ENCODE measurements at regions of chr7 and their contacts with region 1.

Region 1: GRCh38 chr7:92833024-92833765 is 3.2 kb downstream of the CDK6 start:
- DNase-seq: peak; percentile 94
- ATAC-seq: peak; percentile 92
- H3K4me3 ChIP-seq: peak overlapping the region; percentile 77
- H3K27ac ChIP-seq: peak overlapping the region; percentile 85
- H3K4me1 ChIP-seq: peaks cover 25% of the 10 kb centered on the region
- H3K27me3 ChIP-seq: no peaks in the 10 kb centered on the region
- CTCF ChIP-seq: peak; percentile 85

Region 2: DNA sequence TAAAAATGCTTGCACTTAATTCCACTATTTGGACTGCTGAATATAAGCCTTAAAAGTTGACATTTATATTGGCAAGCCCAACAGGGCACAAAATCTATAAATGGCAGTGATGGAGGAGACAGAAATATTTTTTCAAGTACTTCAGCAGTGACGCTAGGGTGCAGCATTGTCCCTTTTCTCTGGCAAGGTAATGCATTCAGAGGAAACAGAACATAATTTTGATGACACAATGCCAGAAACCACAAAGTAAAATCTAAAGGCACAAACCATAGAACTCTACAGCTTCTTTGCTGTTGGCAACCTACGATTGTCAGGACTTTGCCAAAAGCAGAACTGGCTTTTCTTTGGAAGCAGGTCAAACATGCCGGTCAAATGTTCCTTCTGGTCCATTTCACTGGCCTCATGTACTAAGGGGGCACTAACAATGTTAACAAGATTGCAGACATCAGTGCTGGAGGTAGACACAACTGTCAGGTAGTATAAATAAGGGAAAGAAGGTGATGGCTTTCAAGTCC is 212.1 kb before region 1 on chr7:
- intact Hi-C with region 1: loop called (anchors 10 kb)
- DNase-seq: no peak
- ATAC-seq: peak; percentile 95
- H3K4me3 ChIP-seq: no peak overlapping the region
- H3K27ac ChIP-seq: peak overlapping the region; percentile 2
- H3K4me1 ChIP-seq: peaks cover 8% of the 10 kb centered on the region
- H3K27me3 ChIP-seq: no peaks in the 10 kb centered on the region
- CTCF ChIP-seq: peak; percentile 76

Region 3: DNA sequence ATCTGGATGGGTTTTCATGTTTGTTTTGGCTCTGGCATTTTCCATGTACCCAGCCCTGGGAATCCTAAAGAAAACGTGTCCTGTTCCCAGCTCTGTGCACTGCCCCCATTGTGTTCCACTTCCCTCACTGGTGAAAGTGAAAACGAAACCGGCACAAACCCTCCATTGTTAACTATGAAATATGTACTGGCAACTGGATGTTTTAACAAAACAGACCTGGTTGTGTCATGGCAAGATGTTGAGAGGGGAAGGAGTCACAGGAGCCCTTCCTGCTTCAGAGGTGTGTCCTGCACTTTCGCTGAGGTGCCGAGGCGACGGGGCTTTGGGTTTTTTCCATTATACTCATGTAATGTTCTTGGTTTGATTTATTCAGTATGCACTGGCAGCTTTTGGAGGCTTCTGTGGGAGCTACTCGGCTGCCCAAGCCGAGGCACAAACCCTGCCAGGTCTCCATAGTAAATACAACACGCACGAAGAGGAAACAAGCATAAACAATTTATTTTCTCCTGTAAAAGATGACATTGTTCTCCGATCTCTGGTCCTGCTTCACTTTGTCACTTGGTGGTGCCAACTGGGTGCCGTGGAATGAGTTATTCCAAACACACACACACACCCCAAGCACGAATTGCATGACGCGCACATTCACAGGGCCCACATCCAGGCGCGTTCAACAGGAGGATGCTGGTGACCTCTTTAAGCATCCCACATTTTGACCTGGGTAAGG is 115.0 kb before region 1 on chr7:
- intact Hi-C with region 1: loop called (anchors 10 kb)
- DNase-seq: no peak
- ATAC-seq: peak; percentile 91
- H3K4me3 ChIP-seq: peak overlapping the region; percentile 46
- H3K27ac ChIP-seq: peak overlapping the region; percentile 91
- H3K4me1 ChIP-seq: peaks cover 14% of the 10 kb centered on the region
- H3K27me3 ChIP-seq: no peaks in the 10 kb centered on the region
- CTCF ChIP-seq: no peak